Vagina (tissue), 2 donors: ENCODE measurements at regions of chr4 and their contacts with region 1.

Region 1: DNA sequence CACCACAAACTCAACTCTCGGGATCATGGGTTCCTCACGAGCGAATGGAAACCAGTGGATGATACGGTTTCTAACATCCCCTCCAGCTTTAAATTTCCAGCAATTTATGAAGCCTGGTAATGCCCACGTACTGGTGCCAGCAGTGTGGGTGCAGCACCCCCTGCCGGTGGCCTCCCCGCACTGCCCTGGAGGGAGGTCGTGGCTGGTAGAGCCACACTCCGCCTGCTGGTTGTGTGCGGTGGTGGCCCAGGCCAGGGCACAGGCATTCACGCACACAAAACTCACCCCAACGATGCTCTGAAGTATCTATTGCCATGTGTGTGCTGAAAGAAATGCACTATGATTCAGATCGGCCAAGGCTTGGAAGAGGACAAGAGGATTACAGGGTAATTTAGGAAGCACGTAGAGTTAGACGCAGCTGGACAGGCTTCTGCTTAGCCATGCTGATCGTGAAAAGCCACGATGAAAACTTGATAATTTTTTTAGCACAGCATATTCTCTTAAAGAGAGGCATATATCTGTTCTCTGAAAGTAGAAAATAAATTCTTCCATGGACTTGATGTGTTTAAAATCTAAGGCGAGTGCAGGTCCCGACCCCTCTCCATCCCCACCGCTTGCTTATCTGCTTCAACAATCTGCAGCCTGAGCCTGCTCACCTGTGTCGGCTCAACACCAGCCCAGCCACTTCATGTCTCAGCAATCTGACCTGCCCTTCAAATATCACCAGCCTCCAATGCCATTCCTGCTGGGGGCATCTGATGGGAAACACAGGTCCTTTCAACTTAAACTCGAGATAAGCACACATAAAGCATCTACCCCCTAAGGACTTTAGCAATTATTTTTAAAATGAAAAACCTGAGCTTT is 59.0 kb downstream of the SCD5 start:
- DNase-seq: no peak
- H3K4me3 ChIP-seq: no peak overlapping the region
- H3K27ac ChIP-seq: no peak overlapping the region
- H3K4me1 ChIP-seq: no peaks in the 10 kb centered on the region
- H3K27me3 ChIP-seq: no peaks in the 10 kb centered on the region
- CTCF ChIP-seq: peak in 2 of 3 experiments; percentile 46 to 74
- POLR2A ChIP-seq: no peak

Region 2: GRCh38 chr4:82423245-82424054 is 316.1 kb before region 1 on chr4:
- intact Hi-C with region 1: no loop called
- DNase-seq: no peak
- H3K4me3 ChIP-seq: no peak overlapping the region
- H3K27ac ChIP-seq: no peak overlapping the region
- H3K4me1 ChIP-seq: peaks cover 27% of the 10 kb centered on the region
- H3K27me3 ChIP-seq: no peaks in the 10 kb centered on the region
- CTCF ChIP-seq: no peak
- POLR2A ChIP-seq: no peak

Region 3: DNA sequence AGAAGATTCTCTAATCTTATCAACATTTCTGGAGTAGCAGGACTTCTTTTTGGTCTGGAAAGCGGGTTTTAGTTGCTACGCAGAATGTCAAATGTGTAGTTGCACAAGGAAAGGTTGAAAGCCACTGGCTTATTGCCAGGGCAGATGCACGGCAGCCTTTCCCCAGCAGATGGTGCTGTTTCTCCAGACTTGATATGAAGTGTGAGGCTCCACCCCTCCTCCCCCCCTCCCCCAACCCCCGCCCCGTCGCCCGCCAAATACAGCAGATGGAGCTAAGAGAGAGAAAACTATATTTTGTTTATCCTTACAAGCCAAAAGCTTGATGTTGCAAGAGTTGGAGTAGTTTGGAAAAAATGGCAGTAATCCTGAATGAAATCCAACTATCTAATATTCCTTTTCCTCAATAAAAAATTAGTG is 277.1 kb before region 1 on chr4:
- intact Hi-C with region 1: loop called (anchors 5 kb)
- DNase-seq: peak in 1 of 2 donors; percentile 97
- H3K4me3 ChIP-seq: no peak overlapping the region
- H3K27ac ChIP-seq: peak overlapping the region; percentile 31
- H3K4me1 ChIP-seq: no peaks in the 10 kb centered on the region
- H3K27me3 ChIP-seq: no peaks in the 10 kb centered on the region
- CTCF ChIP-seq: peak; percentile 35 to 94 (median 54)
- POLR2A ChIP-seq: no peak